ENCODE measurements at regions of chr14 and their contacts with region 1.

Region 1: DNA sequence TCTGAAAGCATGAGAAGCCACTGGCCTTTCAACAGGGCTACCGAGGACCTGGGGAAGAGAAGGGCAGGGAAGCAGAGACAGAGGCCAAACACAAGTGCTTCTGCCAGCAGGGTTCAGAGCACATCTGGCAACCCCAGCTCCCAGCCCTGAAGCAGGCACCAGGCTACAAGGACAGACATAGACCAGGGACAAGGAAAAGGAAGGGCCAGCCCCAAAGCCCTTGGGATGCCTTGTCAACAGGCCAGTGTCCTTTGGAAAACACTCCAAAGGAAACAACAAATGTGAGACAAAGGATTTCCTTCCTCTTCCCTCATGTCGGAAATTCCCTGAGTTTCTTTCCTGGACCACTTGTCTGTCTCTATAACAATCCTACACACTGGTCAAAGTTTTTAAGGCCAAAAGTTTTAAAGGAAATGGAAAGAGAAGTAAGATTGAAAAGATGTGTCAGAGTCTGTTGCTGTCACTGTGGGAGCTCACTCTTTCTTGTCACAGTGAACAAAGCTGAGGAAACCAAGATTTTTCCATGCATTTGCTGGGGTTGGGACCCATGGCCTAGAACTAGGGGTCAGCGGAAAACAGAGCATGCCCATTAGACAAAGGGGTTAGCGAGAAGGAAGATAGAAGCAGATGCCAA is 59.4 kb downstream of the TTC9 start:
- DNase-seq: peak; percentile 34
- ATAC-seq: no peak

Region 2: GRCh38 chr14:70640938-70641547 is 60.0 kb before region 1 on chr14:
- intact Hi-C with region 1: loop called (anchors 5 kb)
- DNase-seq: no peak
- ATAC-seq: peak; percentile 52

Region 3: DNA sequence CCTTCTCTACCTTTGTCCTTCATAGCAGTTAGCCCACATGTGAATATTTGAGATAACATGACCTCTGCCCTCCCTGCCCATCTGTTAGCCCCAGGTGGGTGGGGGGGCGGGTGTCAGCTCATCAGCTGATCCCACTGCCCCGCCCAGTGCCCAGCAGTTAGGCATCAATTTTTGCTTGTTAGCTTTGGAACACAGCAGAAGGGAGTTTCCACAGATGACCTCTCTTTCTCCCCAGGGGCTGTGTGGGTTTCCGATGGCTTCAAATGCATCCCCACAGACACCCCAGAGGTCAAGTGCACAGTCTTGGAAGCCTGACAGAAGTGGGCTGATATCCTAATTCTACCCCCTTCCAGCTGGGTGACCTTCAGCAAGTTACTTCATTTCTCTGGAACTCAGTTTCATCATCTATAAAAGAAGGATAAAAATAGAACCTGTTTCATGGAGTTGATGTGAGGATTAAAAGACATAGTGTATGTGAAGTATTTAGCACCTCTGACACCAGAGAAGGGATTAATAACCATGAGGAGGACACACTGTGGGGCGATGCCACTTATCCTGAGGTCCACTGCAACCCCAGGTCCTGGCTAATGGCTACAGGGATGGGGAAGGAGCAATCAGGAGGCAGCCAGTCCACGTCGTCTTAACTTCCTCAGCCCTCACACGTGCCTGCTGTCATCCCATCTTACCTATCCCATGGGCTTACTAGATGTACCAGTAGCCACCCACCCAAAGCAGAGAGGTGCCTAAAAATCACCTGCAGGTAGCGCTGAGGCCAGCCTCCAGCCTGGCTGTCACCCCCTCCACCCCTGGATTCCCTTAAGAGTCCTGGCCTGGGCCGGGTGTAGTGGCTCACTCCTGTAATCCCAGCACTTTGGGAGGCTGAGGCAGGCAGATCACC is 37.2 kb before region 1 on chr14:
- intact Hi-C with region 1: loop called (anchors 5 kb)
- DNase-seq: no peak
- ATAC-seq: peak; percentile 48